HEK293 (cell line): ENCODE measurements at regions of chr1 and their contacts with region 1.

Region 1: DNA sequence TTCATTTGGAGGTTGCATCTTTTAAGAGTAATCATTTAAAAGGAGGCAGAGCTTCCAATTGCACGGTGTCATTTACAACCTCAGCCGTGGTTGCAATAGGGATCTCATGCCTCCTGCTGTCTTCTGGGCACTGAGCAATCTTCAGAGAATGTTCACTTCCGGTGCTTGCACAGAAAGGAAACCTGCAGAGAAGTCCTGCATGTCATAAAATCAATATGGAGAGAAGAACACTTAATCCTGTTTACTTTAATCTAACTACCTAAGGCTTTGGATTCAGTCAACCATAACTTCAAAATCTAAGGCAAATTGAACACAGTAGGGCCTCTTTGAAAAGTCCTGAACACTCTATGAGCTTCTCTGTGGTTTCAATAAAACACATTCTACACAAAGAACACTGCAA is 11.3 kb upstream of the MAP10 start:
- H3K4me3 ChIP-seq: no peak overlapping the region
- H3K27ac ChIP-seq: peak overlapping the region; percentile 27
- H3K4me1 ChIP-seq: peaks cover 18% of the 10 kb centered on the region
- CTCF ChIP-seq: peak; percentile 50; the same call in 1 of the 2 replicates

Region 2: GRCh38 chr1:232636799-232637198 is 157.1 kb before region 1 on chr1:
- CTCF ChIA-PET with region 1: interaction called, 10 read pairs
- POLR2A ChIA-PET with region 1: no interaction called
- H3K4me3 ChIP-seq: no peak overlapping the region
- H3K27ac ChIP-seq: no peak overlapping the region
- H3K4me1 ChIP-seq: 0 out of 2 replicates have a peak, but pooled peaks cover 3% of the 10 kb centered on the region
- CTCF ChIP-seq: no peak

Region 3: DNA sequence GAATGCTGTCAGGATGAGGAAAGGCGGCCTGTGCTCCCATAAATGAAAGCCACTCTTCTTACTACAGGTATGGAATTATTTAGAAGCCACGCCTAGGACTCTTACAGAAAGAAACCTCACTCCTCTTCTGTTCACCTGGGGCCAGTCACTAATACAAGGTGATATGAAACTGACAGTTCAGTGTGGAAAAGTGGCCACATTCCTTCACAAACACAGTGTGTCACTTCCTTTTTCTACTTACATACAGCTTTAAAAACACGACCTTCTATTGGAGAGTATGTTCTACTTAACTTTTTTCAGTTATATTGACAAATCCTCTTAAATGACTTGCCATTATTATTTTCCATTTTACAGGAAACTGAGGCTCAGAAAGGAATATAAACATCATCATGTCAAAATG is 338.5 kb after region 1 on chr1:
- CTCF ChIA-PET with region 1: no interaction called
- POLR2A ChIA-PET with region 1: no interaction called
- H3K4me3 ChIP-seq: no peak overlapping the region
- H3K27ac ChIP-seq: no peak overlapping the region
- H3K4me1 ChIP-seq: no peaks in the 10 kb centered on the region
- CTCF ChIP-seq: no peak